Heart left ventricle (tissue), 16 donors: ENCODE measurements at regions of chr2 and their contacts with region 1.

Region 1: GRCh38 chr2:69816923-69817542 is 12.4 kb upstream of the GMCL1 start:
- DNase-seq: peak in 4 of 5 donors; percentile 53 to 74 (median 64)
- ATAC-seq: peak in 3 of 4 donors; percentile 49 to 75 (median 70)
- H3K4me3 ChIP-seq: no peak overlapping the region
- H3K27ac ChIP-seq: no peak overlapping the region
- H3K4me1 ChIP-seq: peaks cover 0 to 16% (median 0%) of the 10 kb centered on the region in 12 donors
- H3K27me3 ChIP-seq: no peaks in the 10 kb centered on the region
- CTCF ChIP-seq: peak; percentile 86 to 96 (median 90)
- POLR2A ChIP-seq: no peak

Region 2: DNA sequence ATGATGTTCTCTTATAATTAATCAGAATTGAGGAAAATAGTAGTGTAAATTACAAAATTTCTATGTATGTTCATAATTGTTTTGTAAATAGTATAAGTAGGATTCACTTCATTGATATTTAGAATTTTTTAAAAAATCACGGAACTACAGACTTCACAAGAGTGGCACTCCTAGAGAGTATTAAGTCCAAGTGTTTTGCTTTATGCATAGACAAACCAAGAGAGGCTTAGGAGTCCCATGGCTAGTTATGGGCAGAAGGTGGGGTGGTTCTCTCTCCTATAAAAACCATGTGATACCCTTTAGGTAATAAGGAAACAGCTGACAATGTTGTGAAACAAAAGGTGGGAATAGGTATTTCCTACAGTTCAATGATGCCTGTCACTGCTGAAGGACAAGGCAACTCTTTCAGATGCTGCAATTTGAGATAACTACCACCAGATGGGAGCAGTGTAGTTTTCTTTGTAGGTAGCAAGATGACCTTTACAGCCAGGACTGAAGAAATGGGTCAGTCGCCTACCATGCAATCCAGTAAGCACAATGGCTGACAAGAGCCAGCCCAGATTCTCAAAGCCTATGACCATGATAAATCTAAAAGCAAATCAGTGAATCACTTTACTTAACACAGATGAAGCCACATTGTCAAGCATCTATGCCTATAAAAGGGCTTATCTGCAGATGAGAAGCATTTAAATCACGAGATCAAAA is 257.4 kb before region 1 on chr2:
- intact Hi-C with region 1: loop called in 8 of 10 experiments (anchors 5 to 10 kb)
- DNase-seq: no peak
- ATAC-seq: peak; percentile 30 to 81 (median 77)
- H3K4me3 ChIP-seq: no peak overlapping the region
- H3K27ac ChIP-seq: peak overlapping the region in 4 of 12 donors; percentile 4 to 47 (median 31)
- H3K4me1 ChIP-seq: peaks cover 10 to 62% (median 38%) of the 10 kb centered on the region in 12 donors
- H3K27me3 ChIP-seq: no peaks in the 10 kb centered on the region
- CTCF ChIP-seq: peak; percentile 49 to 75 (median 66)
- POLR2A ChIP-seq: no peak

Region 3: GRCh38 chr2:69565431-69565839 is 251.6 kb before region 1 on chr2:
- intact Hi-C with region 1: loop called in 4 of 10 experiments (anchors 5 to 10 kb)
- DNase-seq: peak; percentile 30 to 71 (median 44)
- ATAC-seq: peak in 3 of 4 donors; percentile 14 to 66 (median 35)
- H3K4me3 ChIP-seq: no peak overlapping the region
- H3K27ac ChIP-seq: peak overlapping the region in 1 of 12 donors; percentile 47
- H3K4me1 ChIP-seq: peaks cover 2 to 86% (median 50%) of the 10 kb centered on the region in 12 donors
- H3K27me3 ChIP-seq: no peaks in the 10 kb centered on the region
- CTCF ChIP-seq: peak; percentile 55 to 84 (median 72)
- POLR2A ChIP-seq: no peak

Region 4: DNA sequence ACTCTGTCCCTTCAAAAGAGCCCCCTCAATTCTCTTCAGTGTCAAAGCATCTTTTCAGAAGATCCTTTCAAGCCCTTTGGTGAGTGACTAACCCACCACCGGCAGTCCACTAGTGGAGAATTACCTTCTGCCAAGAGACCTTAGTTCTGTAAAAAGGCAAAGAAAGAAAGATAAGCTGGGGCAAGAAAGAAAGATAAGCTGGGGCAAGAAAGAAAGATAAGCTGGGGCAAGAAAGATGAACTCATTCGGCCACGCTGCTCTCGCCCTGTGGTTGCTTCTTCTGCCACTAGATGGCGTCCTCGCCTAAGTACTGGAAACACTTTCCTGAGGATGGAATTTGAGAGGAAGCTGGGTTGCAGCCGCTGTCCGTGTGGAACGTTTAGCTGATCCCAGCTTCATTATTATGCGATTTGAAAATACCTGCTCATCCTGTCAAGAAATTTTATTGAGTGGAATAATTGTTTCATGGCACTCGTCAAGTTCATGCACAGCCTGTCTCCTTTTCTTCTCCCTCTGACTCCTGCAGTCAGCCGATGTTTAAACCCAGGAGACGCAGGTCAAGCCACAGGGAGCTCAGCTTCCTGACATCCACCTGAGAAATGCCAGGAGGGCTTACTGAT is 92.4 kb before region 1 on chr2:
- intact Hi-C with region 1: loop called (anchors 1 to 2 kb)
- DNase-seq: peak; percentile 67 to 85 (median 84)
- ATAC-seq: peak; percentile 63 to 92 (median 86)
- H3K4me3 ChIP-seq: peak overlapping the region in 10 of 12 donors; percentile 9 to 54 (median 32)
- H3K27ac ChIP-seq: no peak overlapping the region
- H3K4me1 ChIP-seq: peaks cover 0 to 13% (median 0%) of the 10 kb centered on the region in 12 donors
- H3K27me3 ChIP-seq: no peaks in the 10 kb centered on the region
- CTCF ChIP-seq: peak; percentile 93 to 99 (median 94)
- POLR2A ChIP-seq: no peak

Region 5: DNA sequence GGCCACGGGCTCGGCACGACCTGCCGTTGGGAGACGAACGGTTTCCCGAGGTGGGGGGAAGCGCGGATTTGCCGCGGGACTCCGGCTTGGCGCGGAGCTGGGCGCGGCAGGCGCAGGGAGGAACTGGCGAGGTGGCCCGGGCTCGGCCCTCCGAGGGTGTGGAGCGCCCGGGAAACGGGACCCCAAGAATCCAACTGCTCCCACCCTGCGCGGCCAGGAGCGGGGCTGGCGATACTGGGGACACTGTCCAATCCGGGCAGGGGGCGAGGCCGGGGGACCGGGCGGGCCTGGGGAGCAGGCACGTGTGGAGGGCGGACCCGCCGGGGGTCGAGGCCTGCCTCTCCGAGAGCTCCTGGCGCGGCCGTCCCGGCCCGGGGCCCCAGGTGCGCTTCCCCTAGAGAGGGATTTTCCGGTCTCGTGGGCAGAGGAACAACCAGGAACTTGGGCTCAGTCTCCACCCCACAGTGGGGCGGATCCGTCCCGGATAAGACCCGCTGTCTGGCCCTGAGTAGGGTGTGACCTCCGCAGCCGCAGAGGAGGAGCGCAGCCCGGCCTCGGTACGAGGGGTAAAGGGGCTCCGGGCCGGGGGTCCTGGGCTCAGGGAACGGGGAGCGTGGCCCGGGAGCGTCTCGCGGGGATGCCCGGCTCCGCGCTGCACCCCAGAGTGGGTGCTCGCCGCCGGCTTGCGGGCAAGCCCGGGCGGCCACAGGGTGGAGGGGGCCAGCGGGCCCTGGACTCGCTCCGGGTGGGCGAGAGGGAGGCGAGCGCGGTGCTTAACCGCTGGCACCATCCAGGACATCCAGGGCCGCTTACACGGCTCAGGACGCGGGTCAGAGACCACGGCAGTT is 75.2 kb before region 1 on chr2 and contains the start of gene ANXA4:
- intact Hi-C with region 1: loop called in 2 of 10 experiments (anchors 5 kb)
- DNase-seq: peak; percentile 84 to 91 (median 87)
- ATAC-seq: peak; percentile 68 to 97 (median 94)
- H3K4me3 ChIP-seq: peak within 1 kb of the TSS; percentile 70 to 98 (median 92)
- H3K27ac ChIP-seq: peak within 1 kb of the TSS; percentile 81 to 95 (median 90)
- H3K4me1 ChIP-seq: peaks cover 0 to 43% (median 10%) of the 10 kb centered on the region in 12 donors
- H3K27me3 ChIP-seq: no peaks in the 10 kb centered on the region
- CTCF ChIP-seq: no peak
- POLR2A ChIP-seq: peak in 1 of 2 donors; percentile 87
- total RNA-seq, gene ANXA4: 7.3 to 73.5 (median 22.2) TPM

Region 6: DNA sequence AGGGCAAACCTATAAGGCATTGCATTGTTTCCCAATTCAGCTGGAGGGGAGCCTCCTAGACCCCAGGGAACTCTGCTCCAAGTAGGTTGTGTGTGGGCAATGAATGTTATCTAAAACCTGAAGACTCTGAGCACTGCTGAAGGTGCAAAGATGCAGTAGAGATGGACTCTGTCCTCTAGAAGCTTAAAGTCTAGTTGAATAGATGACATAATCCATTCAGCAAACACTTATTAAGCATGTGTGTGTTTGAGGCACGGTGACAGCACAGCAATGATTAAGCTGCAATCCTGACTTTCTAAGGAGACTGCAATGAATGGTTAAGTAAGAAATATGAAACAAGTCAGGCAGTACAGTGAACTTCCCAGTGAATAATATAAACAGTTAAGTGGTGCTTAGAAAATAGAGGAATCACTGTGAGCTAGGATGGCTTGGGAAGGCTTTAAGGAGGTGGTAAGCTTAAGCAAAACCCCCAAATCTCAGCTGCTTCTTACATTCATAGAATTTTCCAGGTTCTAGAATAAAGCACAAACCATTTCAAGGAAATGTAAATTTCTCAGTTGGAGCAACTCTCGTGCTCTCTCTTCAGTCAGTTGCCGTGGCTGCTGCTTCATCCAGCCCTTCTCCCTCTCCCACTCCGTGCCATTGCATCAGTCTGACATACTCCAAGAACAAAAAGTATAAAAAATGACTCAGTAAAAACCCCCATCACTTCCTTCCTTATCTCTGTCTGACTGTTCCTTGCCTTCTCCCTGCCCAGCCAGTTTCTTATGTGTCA is 117.0 kb after region 1 on chr2:
- intact Hi-C with region 1: no loop called
- DNase-seq: peak in 1 of 5 donors; percentile 57
- ATAC-seq: peak in 3 of 4 donors; percentile 71 to 86 (median 85)
- H3K4me3 ChIP-seq: no peak overlapping the region
- H3K27ac ChIP-seq: peak overlapping the region in 3 of 12 donors; percentile 3 to 79 (median 14)
- H3K4me1 ChIP-seq: peaks cover 0 to 55% (median 11%) of the 10 kb centered on the region in 12 donors
- H3K27me3 ChIP-seq: no peaks in the 10 kb centered on the region
- CTCF ChIP-seq: no peak
- POLR2A ChIP-seq: no peak